Activated CD8-positive, alpha-beta T cell treated with anti-CD3 and anti-CD28 coated beads for 36 hours (primary cell): ENCODE measurements at regions of chr9 and their contacts with region 1.

Region 1: GRCh38 chr9:128361986-128362646 is 9.1 kb upstream of the URM1 start:
- DNase-seq: peak; percentile 83
- ATAC-seq: peak; percentile 91
- H3K4me3 Mint-ChIP-seq: peak overlapping the region; percentile 67
- H3K27ac Mint-ChIP-seq: peak overlapping the region; percentile 77
- H3K4me1 Mint-ChIP-seq: peaks cover 22% of the 10 kb centered on the region
- H3K27me3 Mint-ChIP-seq: peaks cover 1% of the 10 kb centered on the region
- CTCF ChIP-seq: peak; percentile 96

Region 2: DNA sequence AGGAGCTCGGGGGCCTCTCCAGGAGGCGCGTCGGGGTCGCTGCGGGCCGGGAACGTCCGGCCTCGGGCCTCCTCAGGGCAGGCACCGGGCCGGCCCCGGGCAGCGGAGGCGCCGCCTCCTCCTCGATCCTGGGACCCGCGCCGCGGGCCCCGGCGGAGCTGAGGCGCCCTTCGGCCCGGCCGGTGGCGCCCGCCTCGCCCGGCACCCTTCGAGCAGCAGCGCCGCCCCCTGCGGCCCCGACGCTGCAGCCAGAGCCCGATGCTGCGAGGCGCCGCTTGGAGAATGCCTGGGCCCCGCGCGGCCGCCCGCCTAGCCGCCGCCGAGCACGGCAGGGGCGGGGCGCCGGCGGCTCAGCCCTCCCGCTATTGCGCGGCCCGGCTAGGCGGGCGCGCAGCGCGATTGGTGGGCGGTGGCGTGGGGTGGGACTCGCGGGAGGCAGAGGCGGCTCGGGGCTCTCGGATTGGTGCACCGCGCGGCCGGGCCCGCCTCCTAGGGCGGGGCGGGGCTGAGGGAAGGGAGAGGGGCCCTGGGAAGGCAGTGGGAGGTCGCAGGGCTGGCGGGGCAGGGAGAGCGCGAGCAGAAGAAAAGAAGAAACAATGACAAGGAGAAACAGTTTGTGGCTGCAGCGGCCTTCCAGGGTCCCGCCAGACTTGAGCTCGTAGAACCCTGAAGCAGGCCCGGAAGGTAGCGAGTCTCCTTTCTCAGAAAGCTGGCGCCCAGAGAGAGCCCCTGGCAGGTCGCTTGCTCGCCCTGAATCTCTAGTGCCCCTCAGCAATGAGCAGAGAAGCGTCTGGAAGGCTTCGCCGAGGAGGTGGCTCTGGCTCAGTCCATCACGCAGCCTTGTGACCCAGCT is 381.2 kb before region 1 on chr9 and contains the start of gene EEIG1:
- CTCF ChIA-PET with region 1: no interaction called
- POLR2A ChIA-PET with region 1: no interaction called
- intact Hi-C with region 1: no loop called
- DNase-seq: peak; percentile 97
- ATAC-seq: peak; percentile 87
- H3K4me3 Mint-ChIP-seq: peak within 1 kb of the TSS; percentile 97
- H3K27ac Mint-ChIP-seq: peak within 1 kb of the TSS; percentile 97
- H3K4me1 Mint-ChIP-seq: peaks cover 46% of the 10 kb centered on the region
- H3K27me3 Mint-ChIP-seq: no peaks in the 10 kb centered on the region
- CTCF ChIP-seq: no peak
- total RNA-seq, gene EEIG1: 79.7 to 81.5 TPM

Region 3: GRCh38 chr9:128296337-128297220 is 65.5 kb before region 1 on chr9:
- CTCF ChIA-PET with region 1: interaction called, 13 read pairs
- POLR2A ChIA-PET with region 1: no interaction called
- intact Hi-C with region 1: no loop called
- DNase-seq: no peak
- ATAC-seq: no peak
- H3K4me3 Mint-ChIP-seq: no peak overlapping the region
- H3K27ac Mint-ChIP-seq: no peak overlapping the region
- H3K4me1 Mint-ChIP-seq: peaks cover 4% of the 10 kb centered on the region
- H3K27me3 Mint-ChIP-seq: no peaks in the 10 kb centered on the region
- CTCF ChIP-seq: no peak

Region 4: GRCh38 chr9:128339771-128340690 is 22.1 kb before region 1 on chr9 and contains the start of gene SLC27A4:
- CTCF ChIA-PET with region 1: interaction called, 21 read pairs
- POLR2A ChIA-PET with region 1: no interaction called
- intact Hi-C with region 1: no loop called
- DNase-seq: peak; percentile 77
- ATAC-seq: peak; percentile 90
- H3K4me3 Mint-ChIP-seq: peak within 1 kb of the TSS; percentile 80
- H3K27ac Mint-ChIP-seq: peak within 1 kb of the TSS; percentile 83
- H3K4me1 Mint-ChIP-seq: peaks cover 6% of the 10 kb centered on the region
- H3K27me3 Mint-ChIP-seq: no peaks in the 10 kb centered on the region
- CTCF ChIP-seq: no peak
- total RNA-seq, gene SLC27A4: 10.5 to 11.2 TPM

Region 5: GRCh38 chr9:128349125-128349524 is 13.0 kb before region 1 on chr9:
- CTCF ChIA-PET with region 1: interaction called, 11 read pairs
- POLR2A ChIA-PET with region 1: interaction called, 3 read pairs
- intact Hi-C with region 1: no loop called
- DNase-seq: no peak
- ATAC-seq: no peak
- H3K4me3 Mint-ChIP-seq: no peak overlapping the region
- H3K27ac Mint-ChIP-seq: no peak overlapping the region
- H3K4me1 Mint-ChIP-seq: no peaks in the 10 kb centered on the region
- H3K27me3 Mint-ChIP-seq: no peaks in the 10 kb centered on the region
- CTCF ChIP-seq: no peak

Region 6: GRCh38 chr9:128412120-128412790 is 50.1 kb after region 1 on chr9:
- CTCF ChIA-PET with region 1: interaction called, 60 read pairs
- POLR2A ChIA-PET with region 1: interaction called, 6 read pairs
- intact Hi-C with region 1: loop called (anchors 5 kb)
- DNase-seq: peak; percentile 79
- ATAC-seq: peak; percentile 83
- H3K4me3 Mint-ChIP-seq: no peak overlapping the region
- H3K27ac Mint-ChIP-seq: no peak overlapping the region
- H3K4me1 Mint-ChIP-seq: no peaks in the 10 kb centered on the region
- H3K27me3 Mint-ChIP-seq: peaks cover 42% of the 10 kb centered on the region
- CTCF ChIP-seq: peak; percentile 62

Region 7: DNA sequence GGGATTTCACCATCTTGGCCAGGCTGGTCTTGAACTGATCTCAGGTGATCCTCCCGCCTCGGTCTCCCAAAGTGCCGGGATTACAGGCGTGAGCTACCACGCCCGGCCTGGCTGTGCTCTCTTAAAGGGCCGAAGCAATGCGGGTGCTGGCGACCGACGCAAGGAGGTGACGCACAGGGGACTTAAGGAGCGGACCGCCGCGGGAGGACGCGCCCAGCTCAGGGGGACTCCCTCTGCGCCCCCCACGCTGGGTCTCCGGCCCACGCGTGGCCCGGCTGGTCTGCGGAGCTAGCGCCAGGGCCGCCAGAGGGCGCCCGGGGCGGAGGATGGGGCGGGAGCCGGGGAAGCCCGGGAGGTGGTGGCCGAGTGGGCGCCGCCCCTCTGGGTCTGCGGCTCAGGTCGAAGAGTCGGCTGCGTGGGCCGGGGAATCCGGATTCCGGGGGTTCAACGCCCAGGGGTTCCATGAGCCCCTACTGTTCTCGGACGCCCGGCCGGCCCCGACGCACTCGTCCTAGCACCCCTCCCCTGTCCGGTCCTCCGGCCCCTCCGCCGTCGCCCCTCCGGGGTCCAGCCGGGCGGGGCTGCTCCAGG is 58.0 kb after region 1 on chr9:
- CTCF ChIA-PET with region 1: interaction called, 26 read pairs
- POLR2A ChIA-PET with region 1: interaction called, 3 read pairs
- intact Hi-C with region 1: no loop called
- DNase-seq: peak; percentile 78
- ATAC-seq: peak; percentile 83
- H3K4me3 Mint-ChIP-seq: peak overlapping the region; percentile 73
- H3K27ac Mint-ChIP-seq: no peak overlapping the region
- H3K4me1 Mint-ChIP-seq: peaks cover 6% of the 10 kb centered on the region
- H3K27me3 Mint-ChIP-seq: peaks cover 22% of the 10 kb centered on the region
- CTCF ChIP-seq: peak; percentile 85

Region 8: DNA sequence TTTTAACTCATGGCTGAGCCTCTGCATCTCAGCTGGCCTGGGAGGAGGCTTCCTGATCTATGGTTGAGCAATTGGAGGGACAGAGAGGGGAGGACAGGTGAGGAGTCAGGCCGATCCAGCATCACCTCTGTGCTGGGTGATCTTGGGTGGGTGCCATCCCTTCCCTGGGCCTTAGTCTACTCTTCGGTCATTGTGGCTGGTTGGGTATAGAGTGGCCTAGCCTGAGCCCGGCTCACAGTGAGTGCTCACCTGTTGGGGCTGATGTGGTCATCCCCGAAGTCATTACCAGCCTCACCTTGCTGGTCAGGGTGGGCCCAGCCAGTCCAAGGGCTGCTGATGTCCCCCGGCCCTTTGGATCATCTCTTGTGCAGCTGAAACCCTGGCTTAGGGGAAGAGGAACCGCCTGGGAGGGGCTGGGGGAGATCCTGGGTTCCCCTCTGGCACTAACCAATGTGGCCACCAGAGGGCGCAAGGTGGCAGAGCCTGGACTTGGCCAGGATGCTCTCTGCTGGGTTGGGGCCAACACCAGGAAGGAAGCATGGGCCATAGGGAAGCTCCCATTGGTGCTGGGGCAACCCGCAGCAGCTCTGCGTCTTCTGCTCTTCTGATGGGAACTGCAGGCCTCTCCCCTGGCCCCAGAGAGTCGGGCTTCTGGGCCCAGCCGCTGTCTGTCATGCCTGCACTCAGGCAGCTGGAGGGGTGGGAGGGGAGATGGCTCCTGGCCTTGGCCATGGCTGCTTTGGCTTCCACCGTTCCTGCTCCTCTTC is 76.4 kb after region 1 on chr9:
- CTCF ChIA-PET with region 1: interaction called, 16 read pairs
- POLR2A ChIA-PET with region 1: no interaction called
- intact Hi-C with region 1: no loop called
- DNase-seq: peak; percentile 89
- ATAC-seq: peak; percentile 99
- H3K4me3 Mint-ChIP-seq: no peak overlapping the region
- H3K27ac Mint-ChIP-seq: no peak overlapping the region
- H3K4me1 Mint-ChIP-seq: no peaks in the 10 kb centered on the region
- H3K27me3 Mint-ChIP-seq: no peaks in the 10 kb centered on the region
- CTCF ChIP-seq: peak; percentile 97